Colonic mucosa (tissue), 4 donors: ENCODE measurements at regions of chr7 and their contacts with region 1.

Region 1: GRCh38 chr7:80699045-80699638 is 60.7 kb downstream of the CD36 start:
- DNase-seq: no peak
- H3K4me3 ChIP-seq: no peak overlapping the region
- H3K27ac ChIP-seq: no peak overlapping the region
- H3K4me1 ChIP-seq: no peaks in the 10 kb centered on the region
- H3K27me3 ChIP-seq: no peaks in the 10 kb centered on the region
- CTCF ChIP-seq: peak; percentile 51

Region 2: GRCh38 chr7:80918909-80919662 is 219.9 kb after region 1 on chr7 and contains the start of gene SEMA3C:
- intact Hi-C with region 1: loop called (anchors 10 kb)
- DNase-seq: peak; percentile 90
- H3K4me3 ChIP-seq: peak within 1 kb of the TSS; percentile 41
- H3K27ac ChIP-seq: peak within 1 kb of the TSS; percentile 87
- H3K4me1 ChIP-seq: peaks cover 6% of the 10 kb centered on the region
- H3K27me3 ChIP-seq: no peaks in the 10 kb centered on the region
- CTCF ChIP-seq: no peak
- total RNA-seq, gene SEMA3C: 41.9 to 103 TPM

Region 3: DNA sequence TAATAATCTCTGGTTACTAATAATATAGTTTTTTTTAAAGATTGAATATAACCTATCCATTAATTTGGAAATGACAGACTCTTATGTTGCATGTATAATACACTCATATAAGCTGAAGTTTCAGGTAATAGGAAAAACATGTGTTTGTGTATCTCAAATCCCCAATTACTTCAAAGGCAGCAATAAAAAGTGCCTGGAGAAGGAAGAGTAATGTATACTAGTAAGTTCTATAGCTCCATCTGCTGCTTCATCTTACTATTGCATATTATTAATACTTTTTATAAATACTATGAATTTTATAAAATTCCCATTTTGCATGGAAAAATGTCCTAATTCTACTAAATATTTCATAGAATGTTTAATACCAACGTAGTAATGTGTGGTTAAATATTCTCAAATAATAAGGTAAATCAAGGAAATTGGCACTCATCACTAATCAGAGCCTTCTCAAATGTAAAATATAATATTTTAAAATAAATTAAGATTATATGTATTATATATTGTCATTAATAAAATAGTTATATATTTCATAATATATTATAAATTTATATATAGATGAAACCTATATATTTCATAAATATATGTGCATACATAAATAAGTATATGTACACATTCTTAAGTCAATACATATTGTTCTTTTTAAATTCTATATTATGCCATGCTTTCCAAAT is 758.8 kb after region 1 on chr7:
- intact Hi-C with region 1: loop called (anchors 5 kb)
- DNase-seq: no peak
- H3K4me3 ChIP-seq: no peak overlapping the region
- H3K27ac ChIP-seq: no peak overlapping the region
- H3K4me1 ChIP-seq: no peaks in the 10 kb centered on the region
- H3K27me3 ChIP-seq: no peaks in the 10 kb centered on the region
- CTCF ChIP-seq: peak; percentile 37

Region 4: DNA sequence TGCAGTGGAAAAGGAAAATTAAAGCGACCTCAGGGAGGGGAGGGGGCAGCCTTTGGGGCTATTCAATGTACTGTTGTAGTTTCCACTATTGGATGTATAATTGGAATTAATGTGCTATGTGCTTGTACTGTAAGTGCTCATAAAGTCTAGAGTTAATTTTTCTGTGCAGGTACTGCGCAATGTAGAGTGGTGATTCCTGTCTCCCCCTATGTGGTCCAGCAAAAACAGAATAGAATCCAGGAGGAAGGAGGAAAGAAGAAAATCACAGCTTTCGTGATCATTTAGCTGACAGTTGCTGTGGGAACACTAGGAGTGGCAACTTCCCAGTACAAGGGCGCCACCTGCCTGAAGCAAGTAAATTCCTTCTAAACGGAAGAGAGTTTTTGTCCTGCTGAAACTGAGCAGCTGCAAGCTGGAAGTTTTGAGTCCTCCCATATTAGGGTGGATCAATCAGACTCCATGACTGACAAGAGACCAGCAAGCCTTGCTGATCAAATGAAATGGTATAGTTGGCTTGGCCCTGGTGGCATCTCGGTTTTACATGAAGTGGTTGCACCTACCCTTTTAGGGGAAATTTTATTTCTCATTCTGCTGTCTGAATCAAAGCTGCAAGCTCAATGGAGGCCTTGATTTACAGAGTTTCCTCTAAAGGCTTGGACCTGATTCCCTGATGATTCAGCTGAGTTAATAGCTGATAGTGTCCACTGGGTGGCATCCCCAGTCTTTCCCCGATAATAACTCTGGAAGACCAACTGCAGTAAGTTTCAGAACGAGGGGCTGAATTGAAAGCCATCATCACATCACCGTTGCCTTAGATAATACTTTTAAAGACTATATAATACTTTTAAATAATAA is 771.0 kb after region 1 on chr7:
- intact Hi-C with region 1: loop called (anchors 5 kb)
- DNase-seq: peak; percentile 81
- H3K4me3 ChIP-seq: no peak overlapping the region
- H3K27ac ChIP-seq: no peak overlapping the region
- H3K4me1 ChIP-seq: no peaks in the 10 kb centered on the region
- H3K27me3 ChIP-seq: no peaks in the 10 kb centered on the region
- CTCF ChIP-seq: peak; percentile 51